Ascending aorta (tissue), 2 donors: ENCODE measurements at regions of chr1 and their contacts with region 1.

Region 1: DNA sequence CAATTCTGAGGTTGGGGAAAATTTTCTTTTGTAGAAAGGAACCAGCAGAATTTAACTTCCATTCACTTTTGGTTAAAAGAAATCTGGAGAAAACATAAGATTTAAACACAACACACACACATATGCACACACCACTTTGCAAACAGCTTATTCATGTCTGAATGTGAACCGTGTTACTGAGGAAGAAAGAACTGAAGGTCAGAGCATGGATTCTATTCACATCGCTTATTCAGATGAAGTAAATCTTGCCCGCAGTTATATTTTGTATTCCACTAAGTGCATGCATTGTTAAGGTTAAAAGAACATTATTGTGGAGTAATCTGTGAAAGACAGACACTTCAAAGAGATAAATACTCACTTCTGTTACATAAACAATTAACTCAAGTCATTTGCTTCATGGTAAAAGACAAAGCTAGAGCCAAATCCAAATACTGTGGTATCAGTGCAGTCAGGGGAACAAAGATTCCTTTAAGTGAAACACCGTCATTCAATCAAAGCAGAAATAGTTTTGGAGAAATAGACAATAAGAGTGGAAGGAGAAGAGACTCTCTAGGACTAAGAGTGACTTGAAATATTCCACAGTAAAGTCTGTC is 82.0 kb downstream of the LRRC53 start:
- DNase-seq: no peak
- H3K4me3 ChIP-seq: no peak overlapping the region
- H3K27ac ChIP-seq: no peak overlapping the region
- H3K4me1 ChIP-seq: no peaks in the 10 kb centered on the region
- H3K27me3 ChIP-seq: no peaks in the 10 kb centered on the region
- CTCF ChIP-seq: no peak

Region 2: GRCh38 chr1:72690871-72691270 is 1739.6 kb before region 1 on chr1:
- intact Hi-C with region 1: loop called (anchors 10 kb)
- DNase-seq: no peak
- H3K4me3 ChIP-seq: no peak overlapping the region
- H3K27ac ChIP-seq: no peak overlapping the region
- H3K4me1 ChIP-seq: no peaks in the 10 kb centered on the region
- H3K27me3 ChIP-seq: no peaks in the 10 kb centered on the region
- CTCF ChIP-seq: no peak